CD4-positive, alpha-beta T cell (primary cell): ENCODE measurements at regions of chr13 and their contacts with region 1.

Region 1: GRCh38 chr13:50123862-50124536 is 108.8 kb downstream of the KCNRG start:
- DNase-seq: peak; percentile 44 to 93 (median 64)
- ATAC-seq: peak; percentile 64
- H3K4me3 ChIP-seq: peak overlapping the region; percentile 90
- H3K4me3 Mint-ChIP-seq: peak overlapping the region; percentile 93
- H3K27ac ChIP-seq: peak overlapping the region; percentile 88 to 98
- H3K27ac Mint-ChIP-seq: peak overlapping the region; percentile 94
- H3K4me1 ChIP-seq: peaks cover 44% of the 10 kb centered on the region
- H3K4me1 Mint-ChIP-seq: peaks cover 58% of the 10 kb centered on the region
- H3K27me3 ChIP-seq: peaks cover 13 to 14% of the 10 kb centered on the region in 2 experiments
- H3K27me3 Mint-ChIP-seq: peaks cover 23% of the 10 kb centered on the region
- CTCF ChIP-seq: no peak

Region 2: GRCh38 chr13:49690992-49691886 is 432.8 kb before region 1 on chr13 and contains the start of gene EBPL:
- CTCF ChIA-PET with region 1: no interaction called
- POLR2A ChIA-PET with region 1: interaction called, 4 read pairs
- intact Hi-C with region 1: loop called in 1 of 2 experiments (anchors 10 kb)
- DNase-seq: peak; percentile 66 to 95 (median 84)
- ATAC-seq: peak; percentile 95
- H3K4me3 ChIP-seq: peak within 1 kb of the TSS; percentile 93
- H3K4me3 Mint-ChIP-seq: peak within 1 kb of the TSS; percentile 92
- H3K27ac ChIP-seq: peak within 1 kb of the TSS; percentile 49 to 52
- H3K27ac Mint-ChIP-seq: peak within 1 kb of the TSS; percentile 71
- H3K4me1 ChIP-seq: peaks cover 19% of the 10 kb centered on the region
- H3K4me1 Mint-ChIP-seq: peaks cover 52% of the 10 kb centered on the region
- H3K27me3 ChIP-seq: no peaks in the 10 kb centered on the region
- H3K27me3 Mint-ChIP-seq: no peaks in the 10 kb centered on the region
- CTCF ChIP-seq: no peak
- total RNA-seq, gene EBPL: 22.3 to 23.2 TPM

Region 3: DNA sequence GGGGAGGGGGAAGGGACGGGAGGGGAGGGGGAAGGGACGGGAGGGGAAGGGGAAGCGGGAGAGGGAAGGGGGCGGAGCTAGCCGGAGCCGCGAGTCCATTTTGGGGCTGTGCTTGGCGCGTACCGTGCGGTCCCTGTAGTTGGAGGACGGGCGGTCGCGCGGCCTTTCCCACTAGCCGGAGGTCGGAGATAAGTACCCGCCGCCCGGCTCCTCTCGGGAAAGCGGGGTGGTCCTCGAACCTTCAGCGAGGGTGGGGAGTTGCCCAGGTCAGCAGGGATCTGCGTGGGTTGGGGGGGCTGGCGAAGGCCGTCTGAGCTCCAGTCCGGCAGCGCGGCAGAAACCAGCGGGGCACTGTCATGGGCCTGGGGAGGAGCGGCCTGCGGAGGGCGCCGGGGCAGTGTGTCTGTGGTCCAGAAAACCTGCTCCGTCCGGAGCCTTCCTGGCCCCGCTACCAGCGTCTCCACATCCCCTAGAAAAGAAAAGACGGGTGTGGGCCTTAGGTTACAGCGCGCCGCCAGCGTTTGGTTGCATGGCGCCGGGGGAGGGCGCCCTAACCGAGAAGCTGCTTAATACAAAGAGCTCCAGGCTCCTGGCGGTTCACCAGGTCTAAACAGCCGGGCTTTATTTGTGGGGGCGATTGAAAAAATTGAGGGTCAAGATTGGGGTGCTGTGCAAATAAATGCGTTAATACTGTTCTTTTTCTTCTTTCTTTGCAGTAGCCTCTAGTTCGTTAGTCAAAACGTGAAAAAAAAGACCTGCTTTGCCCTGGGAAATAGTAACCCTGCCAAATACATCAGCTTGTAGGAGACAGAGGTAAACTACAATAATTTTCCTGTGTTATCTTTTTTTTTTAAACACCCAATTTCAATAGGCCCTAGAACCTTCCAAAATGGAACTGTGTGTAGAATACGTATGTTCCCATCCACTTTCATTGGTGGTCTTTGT is 126.8 kb before region 1 on chr13 and contains the start of gene TRIM13:
- CTCF ChIA-PET with region 1: interaction called, 8 read pairs
- POLR2A ChIA-PET with region 1: interaction called, 232 read pairs
- intact Hi-C with region 1: loop called (anchors 2 kb)
- DNase-seq: peak; percentile 72 to 91 (median 80)
- ATAC-seq: peak; percentile 83
- H3K4me3 ChIP-seq: peak within 1 kb of the TSS; percentile 96
- H3K4me3 Mint-ChIP-seq: peak within 1 kb of the TSS; percentile 97
- H3K27ac ChIP-seq: peak within 1 kb of the TSS; percentile 91
- H3K27ac Mint-ChIP-seq: peak within 1 kb of the TSS; percentile 90
- H3K4me1 ChIP-seq: peaks cover 32% of the 10 kb centered on the region
- H3K4me1 Mint-ChIP-seq: peaks cover 56% of the 10 kb centered on the region
- H3K27me3 ChIP-seq: no peaks in the 10 kb centered on the region
- H3K27me3 Mint-ChIP-seq: no peaks in the 10 kb centered on the region
- CTCF ChIP-seq: peak; percentile 95
- total RNA-seq, gene TRIM13: 32.5 to 32.9 TPM

Region 4: DNA sequence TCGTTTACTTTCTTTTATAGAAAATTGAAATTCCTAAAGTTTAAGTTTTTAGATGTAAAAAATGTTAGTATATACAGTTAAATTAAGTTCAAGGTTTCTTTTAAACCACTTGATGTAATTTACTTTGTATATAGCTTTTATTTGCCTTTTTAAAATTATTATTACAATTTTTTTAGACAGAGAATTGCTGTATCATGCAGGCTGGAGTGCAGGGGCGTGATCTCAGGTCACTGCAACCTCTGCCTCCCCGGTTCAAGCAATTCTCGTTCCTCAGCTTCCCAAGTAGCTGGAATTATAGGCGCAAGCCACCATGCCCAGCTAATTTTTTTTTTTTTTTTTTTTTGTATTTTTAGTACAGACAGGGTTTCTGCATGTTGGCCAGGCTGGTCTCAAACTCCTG is 33.8 kb before region 1 on chr13:
- CTCF ChIA-PET with region 1: interaction called, 19 read pairs
- POLR2A ChIA-PET with region 1: interaction called, 498 read pairs
- intact Hi-C with region 1: loop called in 1 of 2 experiments (anchors 2 kb)
- DNase-seq: no peak
- ATAC-seq: no peak
- H3K4me3 ChIP-seq: no peak overlapping the region
- H3K4me3 Mint-ChIP-seq: no peak overlapping the region
- H3K27ac ChIP-seq: no peak overlapping the region
- H3K27ac Mint-ChIP-seq: no peak overlapping the region
- H3K4me1 ChIP-seq: no peaks in the 10 kb centered on the region
- H3K4me1 Mint-ChIP-seq: peaks cover 11% of the 10 kb centered on the region
- H3K27me3 ChIP-seq: no peaks in the 10 kb centered on the region
- H3K27me3 Mint-ChIP-seq: no peaks in the 10 kb centered on the region
- CTCF ChIP-seq: no peak

Region 5: GRCh38 chr13:50198508-50198907 is 74.5 kb after region 1 on chr13:
- CTCF ChIA-PET with region 1: no interaction called
- POLR2A ChIA-PET with region 1: no interaction called
- intact Hi-C with region 1: no loop called
- DNase-seq: no peak
- ATAC-seq: no peak
- H3K4me3 ChIP-seq: no peak overlapping the region
- H3K4me3 Mint-ChIP-seq: no peak overlapping the region
- H3K27ac ChIP-seq: no peak overlapping the region
- H3K27ac Mint-ChIP-seq: no peak overlapping the region
- H3K4me1 ChIP-seq: no peaks in the 10 kb centered on the region
- H3K4me1 Mint-ChIP-seq: no peaks in the 10 kb centered on the region
- H3K27me3 ChIP-seq: no peaks in the 10 kb centered on the region
- H3K27me3 Mint-ChIP-seq: no peaks in the 10 kb centered on the region
- CTCF ChIP-seq: no peak

Region 6: GRCh38 chr13:50236898-50237318 is 112.9 kb after region 1 on chr13:
- CTCF ChIA-PET with region 1: no interaction called
- POLR2A ChIA-PET with region 1: interaction called, 52 read pairs
- intact Hi-C with region 1: no loop called
- DNase-seq: peak in 6 of 14 experiments; percentile 5 to 79 (median 56)
- ATAC-seq: peak; percentile 91
- H3K4me3 ChIP-seq: peak overlapping the region; percentile 47
- H3K4me3 Mint-ChIP-seq: peak overlapping the region; percentile 78
- H3K27ac ChIP-seq: peak overlapping the region in 1 of 2 donors; percentile 56
- H3K27ac Mint-ChIP-seq: peak overlapping the region; percentile 67
- H3K4me1 ChIP-seq: peaks cover 11% of the 10 kb centered on the region
- H3K4me1 Mint-ChIP-seq: peaks cover 32% of the 10 kb centered on the region
- H3K27me3 ChIP-seq: no peaks in the 10 kb centered on the region
- H3K27me3 Mint-ChIP-seq: no peaks in the 10 kb centered on the region
- CTCF ChIP-seq: no peak

Region 7: DNA sequence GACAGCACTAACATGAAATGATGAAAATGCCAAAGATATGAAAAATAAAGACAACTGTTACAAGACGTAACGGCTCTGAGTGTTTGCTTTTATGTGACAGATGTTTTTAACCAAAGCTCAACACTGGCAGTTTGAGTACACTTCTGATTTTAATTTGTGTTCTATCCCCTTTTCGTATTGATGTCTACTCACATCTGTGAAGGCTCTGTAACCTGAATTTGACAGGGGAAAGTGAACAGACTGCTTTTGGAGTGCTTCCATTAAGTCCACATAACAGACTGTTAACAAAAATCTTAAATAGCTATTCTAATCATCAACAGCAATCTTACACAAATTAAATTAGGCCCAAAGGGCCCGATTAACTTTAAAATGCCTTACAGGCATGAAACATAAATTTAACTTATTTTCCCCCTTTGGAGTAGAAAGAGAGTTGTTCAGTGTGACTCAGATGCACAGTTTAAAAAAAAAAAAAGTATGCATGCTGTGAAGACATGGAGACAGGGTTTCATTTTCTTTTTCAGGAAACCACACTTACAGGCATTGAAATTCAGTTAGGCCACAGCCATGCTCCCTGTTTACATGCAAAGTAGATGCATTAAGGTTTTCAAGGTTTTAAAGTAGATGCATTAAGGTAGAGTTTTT is 769.3 kb after region 1 on chr13:
- CTCF ChIA-PET with region 1: no interaction called
- POLR2A ChIA-PET with region 1: interaction called, 53 read pairs
- intact Hi-C with region 1: no loop called
- DNase-seq: peak in 5 of 14 experiments; percentile 22 to 83 (median 71)
- ATAC-seq: peak; percentile 92
- H3K4me3 ChIP-seq: peak overlapping the region; percentile 28
- H3K4me3 Mint-ChIP-seq: peak overlapping the region; percentile 83
- H3K27ac ChIP-seq: peak overlapping the region; percentile 66 to 81
- H3K27ac Mint-ChIP-seq: peak overlapping the region; percentile 84
- H3K4me1 ChIP-seq: peaks cover 19% of the 10 kb centered on the region
- H3K4me1 Mint-ChIP-seq: peaks cover 43% of the 10 kb centered on the region
- H3K27me3 ChIP-seq: no peaks in the 10 kb centered on the region
- H3K27me3 Mint-ChIP-seq: no peaks in the 10 kb centered on the region
- CTCF ChIP-seq: no peak